CD8-positive, alpha-beta T cell (primary cell): ENCODE measurements at regions of chr9 and their contacts with region 1.

Region 1: GRCh38 chr9:107222020-107222522 is 61.0 kb upstream of the RAD23B start:
- DNase-seq: no peak
- ATAC-seq: no peak
- H3K4me3 ChIP-seq: no peak overlapping the region
- H3K4me3 Mint-ChIP-seq: no peak overlapping the region
- H3K27ac ChIP-seq: no peak overlapping the region
- H3K27ac Mint-ChIP-seq: no peak overlapping the region
- H3K4me1 ChIP-seq: no peaks in the 10 kb centered on the region
- H3K4me1 Mint-ChIP-seq: no peaks in the 10 kb centered on the region
- H3K27me3 ChIP-seq: no peaks in the 10 kb centered on the region
- H3K27me3 Mint-ChIP-seq: peaks cover 10% of the 10 kb centered on the region
- CTCF ChIP-seq: no peak

Region 2: DNA sequence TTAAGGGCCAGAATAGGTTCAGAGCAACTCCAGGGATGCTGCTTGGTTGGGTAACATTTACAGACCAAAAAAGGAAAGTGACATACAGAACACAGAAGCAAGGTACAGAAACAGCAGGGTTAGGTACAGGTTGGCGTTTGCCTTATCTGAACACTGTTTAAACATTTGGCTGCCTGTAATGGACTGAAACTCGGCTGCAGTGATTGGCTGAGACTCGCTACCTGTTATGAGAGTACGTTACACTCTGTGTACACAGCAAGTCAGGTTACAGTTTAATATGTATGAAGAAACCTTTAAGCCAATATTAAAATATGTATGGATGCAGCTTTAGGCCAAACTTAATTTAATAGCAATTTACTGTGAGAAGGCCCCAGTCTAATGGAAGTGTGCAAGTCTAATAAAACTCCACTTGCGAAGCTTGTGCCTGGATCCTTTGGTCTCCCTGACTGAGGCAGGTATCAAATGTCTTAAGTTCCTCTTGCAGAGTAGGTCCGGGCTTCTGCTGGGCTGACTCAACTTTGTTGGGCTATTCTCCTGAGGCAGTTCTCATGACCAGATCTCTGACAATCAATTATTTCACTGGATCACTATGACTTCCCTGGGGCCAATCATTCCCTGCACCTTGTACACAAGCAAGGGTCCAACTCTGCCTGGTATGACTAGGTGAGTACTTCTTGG is 154.2 kb before region 1 on chr9:
- CTCF ChIA-PET with region 1: no interaction called
- POLR2A ChIA-PET with region 1: no interaction called
- intact Hi-C with region 1: no loop called
- DNase-seq: no peak
- ATAC-seq: no peak
- H3K4me3 ChIP-seq: no peak overlapping the region
- H3K4me3 Mint-ChIP-seq: no peak overlapping the region
- H3K27ac ChIP-seq: no peak overlapping the region
- H3K27ac Mint-ChIP-seq: no peak overlapping the region
- H3K4me1 ChIP-seq: no peaks in the 10 kb centered on the region
- H3K4me1 Mint-ChIP-seq: no peaks in the 10 kb centered on the region
- H3K27me3 ChIP-seq: no peaks in the 10 kb centered on the region
- H3K27me3 Mint-ChIP-seq: no peaks in the 10 kb centered on the region
- CTCF ChIP-seq: no peak

Region 3: DNA sequence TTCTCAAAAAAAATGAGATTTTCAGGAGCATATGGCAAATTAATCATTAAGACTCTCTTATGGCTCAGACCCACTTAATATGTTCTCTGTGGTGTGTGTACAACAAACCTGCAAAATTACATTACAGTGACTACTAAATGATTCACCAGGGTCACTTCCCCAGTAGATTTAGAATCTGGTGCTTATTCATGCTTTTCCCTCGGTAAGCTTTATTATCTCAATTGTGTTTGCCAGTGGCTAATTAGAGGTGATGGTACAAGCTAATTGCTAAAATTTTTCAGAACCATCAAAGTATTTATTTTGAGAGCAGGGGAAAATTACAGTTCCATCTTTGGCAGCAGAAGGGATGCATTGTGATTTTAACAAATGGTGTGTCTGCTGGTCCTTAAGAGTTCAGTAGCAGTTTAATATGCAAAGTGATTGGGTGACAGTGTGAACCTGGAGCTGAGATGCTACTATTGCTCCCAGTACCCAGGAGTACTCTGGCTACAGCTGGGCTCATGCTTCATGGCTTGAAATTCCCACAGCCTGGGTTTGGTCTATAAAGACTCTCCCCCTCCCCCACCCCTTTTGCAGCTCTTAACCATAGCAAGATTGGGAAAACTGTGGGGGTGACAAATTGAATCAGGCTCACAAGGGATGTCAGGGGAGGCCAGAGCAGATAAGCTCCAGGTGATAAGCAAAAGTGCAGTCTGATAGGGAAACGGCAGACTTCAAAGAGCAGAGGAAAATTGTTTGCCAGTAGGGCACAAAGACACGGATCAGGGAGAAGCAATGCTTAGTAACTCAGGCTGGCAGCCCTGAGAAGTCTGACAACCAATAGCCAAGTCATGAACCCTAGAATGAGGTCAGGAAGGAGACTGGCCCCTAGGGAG is 31.8 kb before region 1 on chr9:
- CTCF ChIA-PET with region 1: no interaction called
- POLR2A ChIA-PET with region 1: no interaction called
- intact Hi-C with region 1: no loop called
- DNase-seq: no peak
- ATAC-seq: no peak
- H3K4me3 ChIP-seq: no peak overlapping the region
- H3K4me3 Mint-ChIP-seq: no peak overlapping the region
- H3K27ac ChIP-seq: no peak overlapping the region
- H3K27ac Mint-ChIP-seq: no peak overlapping the region
- H3K4me1 ChIP-seq: no peaks in the 10 kb centered on the region
- H3K4me1 Mint-ChIP-seq: no peaks in the 10 kb centered on the region
- H3K27me3 ChIP-seq: peaks cover 0 to 3% of the 10 kb centered on the region in 2 experiments
- H3K27me3 Mint-ChIP-seq: peaks cover 7% of the 10 kb centered on the region
- CTCF ChIP-seq: no peak

Region 4: DNA sequence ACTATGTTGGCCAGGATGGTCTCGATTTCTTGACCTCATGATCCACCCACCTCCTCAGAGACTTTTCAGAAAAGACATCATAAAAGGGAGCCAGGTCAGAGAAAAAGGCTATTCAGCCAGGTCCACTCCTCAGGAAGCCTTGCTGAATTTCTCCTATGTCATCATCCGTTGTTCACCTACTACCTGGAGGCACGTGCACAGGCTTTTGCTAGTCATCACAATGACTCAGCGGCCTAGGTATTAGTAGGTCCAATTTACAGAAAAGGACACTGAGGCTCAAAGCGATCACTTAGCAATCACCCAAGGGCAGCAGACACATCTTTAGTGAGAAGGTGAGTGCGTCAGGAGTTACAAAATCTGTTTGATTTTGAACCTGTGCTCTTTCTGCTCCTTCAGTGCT is 11.3 kb before region 1 on chr9:
- CTCF ChIA-PET with region 1: no interaction called
- POLR2A ChIA-PET with region 1: no interaction called
- intact Hi-C with region 1: loop called in 1 of 2 experiments (anchors 1 kb)
- DNase-seq: no peak
- ATAC-seq: no peak
- H3K4me3 ChIP-seq: no peak overlapping the region
- H3K4me3 Mint-ChIP-seq: no peak overlapping the region
- H3K27ac ChIP-seq: no peak overlapping the region
- H3K27ac Mint-ChIP-seq: no peak overlapping the region
- H3K4me1 ChIP-seq: no peaks in the 10 kb centered on the region
- H3K4me1 Mint-ChIP-seq: peaks cover 9% of the 10 kb centered on the region
- H3K27me3 ChIP-seq: no peaks in the 10 kb centered on the region
- H3K27me3 Mint-ChIP-seq: peaks cover 6% of the 10 kb centered on the region
- CTCF ChIP-seq: no peak

Region 5: DNA sequence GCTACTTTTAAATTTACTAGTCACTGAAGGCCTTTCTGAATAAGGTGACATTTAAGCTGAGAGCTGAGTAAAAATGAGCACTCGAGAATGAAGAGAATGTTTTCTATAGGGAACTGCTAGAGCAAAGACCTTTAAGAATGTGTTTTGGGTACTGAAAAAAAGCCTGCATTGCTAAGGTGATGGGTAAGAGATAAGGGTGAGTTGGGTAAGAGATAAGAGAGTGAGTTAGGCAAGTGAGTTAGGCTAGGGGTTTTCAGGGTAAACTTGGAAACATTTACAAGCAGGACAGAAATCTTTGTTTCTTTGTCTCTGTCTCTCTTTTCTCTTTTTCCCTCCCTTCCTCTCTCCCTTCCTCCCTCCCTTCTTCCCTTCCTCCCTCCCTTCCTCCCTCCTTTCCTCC is 66.6 kb after region 1 on chr9:
- CTCF ChIA-PET with region 1: no interaction called
- POLR2A ChIA-PET with region 1: no interaction called
- intact Hi-C with region 1: no loop called
- DNase-seq: no peak
- ATAC-seq: no peak
- H3K4me3 ChIP-seq: no peak overlapping the region
- H3K4me3 Mint-ChIP-seq: no peak overlapping the region
- H3K27ac ChIP-seq: no peak overlapping the region
- H3K27ac Mint-ChIP-seq: peak overlapping the region; percentile 19
- H3K4me1 ChIP-seq: peaks cover 63% of the 10 kb centered on the region
- H3K4me1 Mint-ChIP-seq: peaks cover 71% of the 10 kb centered on the region
- H3K27me3 ChIP-seq: no peaks in the 10 kb centered on the region
- H3K27me3 Mint-ChIP-seq: no peaks in the 10 kb centered on the region
- CTCF ChIP-seq: no peak